H1 (cell line): ENCODE measurements at regions of chr19 and their contacts with region 1.

Region 1: GRCh38 chr19:40425450-40426287 is at the start of gene SERTAD1:
- DNase-seq: peak; percentile 99
- H3K4me3 ChIP-seq: peak within 1 kb of the TSS; percentile 58 to 79 (median 71)
- H3K27ac ChIP-seq: peak within 1 kb of the TSS; percentile 69; the same call in 1 of the 2 replicates
- H3K4me1 ChIP-seq: peaks cover 0 to 6% (median 4%) of the 10 kb centered on the region in 4 experiments; a peak in 3 of 7 replicates
- H3K27me3 ChIP-seq: no peaks in the 10 kb centered on the region
- CTCF ChIP-seq: peak in 2 of 3 experiments; percentile 53 to 71; a peak in 2 of 4 replicates
- EP300 ChIP-seq: no peak
- POLR2A ChIP-seq: peak; percentile 92 to 96
- RAD21 ChIP-seq: no peak
- total RNA-seq, gene SERTAD1: 4.9 and 5.4 TPM in 2 replicates

Region 2: DNA sequence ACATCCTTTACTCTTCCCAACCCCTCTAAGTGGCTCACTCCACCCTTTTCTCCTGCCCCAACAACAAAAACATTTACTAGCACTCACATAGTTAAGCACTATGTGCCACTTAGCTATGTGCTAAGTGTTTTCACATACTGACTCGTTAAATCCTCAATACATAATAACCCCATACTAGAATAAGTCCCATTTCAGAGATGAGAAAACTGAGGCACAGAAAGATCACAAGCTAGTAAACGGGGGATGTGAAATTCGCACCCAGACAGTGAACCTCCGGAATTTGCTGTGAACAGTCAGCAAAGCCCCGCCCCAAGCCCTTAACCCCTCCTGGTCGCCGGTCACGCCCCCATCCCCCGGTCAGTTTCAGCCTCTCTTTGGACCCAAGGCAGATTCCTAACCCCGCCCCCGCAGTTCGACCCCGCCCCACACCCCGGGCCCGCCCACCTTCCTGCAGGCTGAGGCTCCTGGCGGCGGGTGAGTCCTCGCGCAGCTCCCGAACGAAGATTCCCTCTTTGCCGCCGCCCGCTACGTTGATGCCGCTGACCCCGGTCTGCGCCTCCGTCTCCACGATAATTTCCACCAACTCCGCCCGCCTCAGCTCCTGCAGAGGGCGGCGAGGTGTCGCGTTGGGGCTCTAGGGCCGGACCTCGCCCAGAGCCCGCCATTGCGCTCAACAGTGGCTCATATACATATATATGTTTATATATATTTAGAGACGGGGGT is 22.2 kb before region 1 on chr19:
- CTCF ChIA-PET with region 1: interaction called, 41 read pairs
- POLR2A ChIA-PET with region 1: interaction called, 8 read pairs
- DNase-seq: peak; percentile 84 to 100
- H3K4me3 ChIP-seq: peak overlapping the region; percentile 48 to 77 (median 64)
- H3K27ac ChIP-seq: no peak overlapping the region
- H3K4me1 ChIP-seq: peaks cover 0 to 7% (median 3%) of the 10 kb centered on the region in 4 experiments; a peak in 5 of 7 replicates
- H3K27me3 ChIP-seq: peaks cover 0 to under 1% (median under 1%) of the 10 kb centered on the region in 4 experiments; a peak in 4 of 7 replicates
- CTCF ChIP-seq: no peak
- EP300 ChIP-seq: no peak
- POLR2A ChIP-seq: no peak
- RAD21 ChIP-seq: no peak

Region 3: DNA sequence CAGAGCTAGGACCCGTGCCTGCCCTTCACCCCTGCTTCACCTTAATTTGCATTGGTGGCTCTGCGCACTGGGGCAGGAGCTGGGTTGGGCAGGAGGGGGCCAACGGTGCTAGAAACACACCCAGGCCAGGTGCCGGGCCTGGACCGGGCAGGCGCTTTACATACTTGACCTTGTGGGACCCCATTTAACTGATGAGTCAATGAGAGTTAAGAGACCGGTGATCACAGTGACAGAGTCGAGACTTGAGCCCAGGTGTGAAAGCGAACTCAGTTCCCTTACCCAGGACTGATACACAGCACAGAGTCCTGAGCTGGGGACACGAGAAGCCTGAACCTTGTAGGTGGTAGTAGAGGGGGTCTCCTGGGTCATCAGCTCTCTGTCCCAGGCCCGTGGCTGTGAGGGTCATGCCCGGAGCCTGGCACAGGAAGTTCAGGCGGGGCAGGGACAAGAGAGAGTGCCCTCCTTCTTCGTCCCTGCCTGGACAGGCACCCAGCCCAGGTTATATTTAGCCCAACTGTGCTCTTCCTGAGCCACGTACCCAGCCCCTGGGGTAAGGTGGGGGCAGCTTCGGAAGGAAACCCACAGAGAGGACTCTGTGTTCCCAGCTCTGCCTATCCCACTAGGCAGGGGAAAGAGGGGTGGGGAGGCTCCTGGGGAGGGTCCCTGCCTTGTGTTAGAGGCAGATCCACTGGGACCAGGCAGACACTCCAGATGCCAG is 14.4 kb before region 1 on chr19:
- CTCF ChIA-PET with region 1: interaction called, 41 read pairs
- POLR2A ChIA-PET with region 1: interaction called, 18 read pairs
- DNase-seq: no peak
- H3K4me3 ChIP-seq: no peak overlapping the region
- H3K27ac ChIP-seq: no peak overlapping the region
- H3K4me1 ChIP-seq: peaks cover 7 to 21% (median 13%) of the 10 kb centered on the region in 4 experiments
- H3K27me3 ChIP-seq: no peaks in the 10 kb centered on the region
- CTCF ChIP-seq: no peak
- EP300 ChIP-seq: no peak
- POLR2A ChIP-seq: no peak
- RAD21 ChIP-seq: no peak